ENCODE measurements at regions of chr12 and their contacts with region 1.

Region 1: DNA sequence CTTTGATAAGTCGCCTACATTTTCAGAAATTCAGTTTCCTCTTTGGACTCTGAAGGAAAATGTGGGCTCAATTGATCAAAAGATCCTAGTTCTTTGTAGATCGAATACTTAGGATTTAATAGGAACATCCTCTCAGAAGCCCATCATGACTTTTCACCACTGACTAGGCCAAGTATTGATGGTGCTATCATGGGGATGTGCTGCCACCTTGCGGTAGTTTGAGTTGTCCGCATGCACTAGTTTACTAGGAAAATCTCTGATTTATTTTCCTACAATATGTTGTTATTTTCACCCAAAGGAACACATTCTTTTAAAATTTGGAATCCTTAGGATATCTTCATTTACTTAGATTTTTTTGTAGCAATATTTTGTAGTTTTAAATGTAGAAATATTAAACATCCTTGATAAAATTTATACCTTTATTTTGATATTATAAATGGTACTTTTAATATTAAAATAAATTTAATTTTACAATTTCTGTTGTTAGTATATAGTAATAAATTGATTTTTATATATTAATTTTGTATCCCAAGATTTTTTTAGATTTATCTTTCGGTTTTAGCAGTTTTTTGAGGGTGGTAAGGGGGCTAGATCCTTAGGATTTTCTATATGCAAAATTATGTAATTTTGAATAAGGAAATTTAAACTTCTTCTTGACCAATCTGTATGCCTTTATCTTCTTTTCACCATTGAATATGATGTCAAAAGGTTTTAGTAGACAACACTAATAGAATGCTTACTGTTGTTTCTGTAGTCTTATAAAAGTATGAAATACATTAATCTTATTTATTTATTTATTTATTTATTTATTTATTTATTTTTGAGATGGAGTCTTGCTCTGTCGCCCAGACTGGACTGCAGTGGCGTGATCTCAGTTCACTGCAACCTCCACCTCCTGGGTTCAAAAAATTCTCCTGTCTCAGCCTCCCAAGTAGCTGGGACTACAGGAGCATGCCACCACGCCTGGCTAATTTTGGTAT is 52.9 kb upstream of the OR9K2 start:
- H3K4me3 ChIP-seq: no peak overlapping the region
- H3K27ac ChIP-seq: no peak overlapping the region
- H3K4me1 ChIP-seq: no peaks in the 10 kb centered on the region
- CTCF ChIP-seq: peak; percentile 47

Region 2: DNA sequence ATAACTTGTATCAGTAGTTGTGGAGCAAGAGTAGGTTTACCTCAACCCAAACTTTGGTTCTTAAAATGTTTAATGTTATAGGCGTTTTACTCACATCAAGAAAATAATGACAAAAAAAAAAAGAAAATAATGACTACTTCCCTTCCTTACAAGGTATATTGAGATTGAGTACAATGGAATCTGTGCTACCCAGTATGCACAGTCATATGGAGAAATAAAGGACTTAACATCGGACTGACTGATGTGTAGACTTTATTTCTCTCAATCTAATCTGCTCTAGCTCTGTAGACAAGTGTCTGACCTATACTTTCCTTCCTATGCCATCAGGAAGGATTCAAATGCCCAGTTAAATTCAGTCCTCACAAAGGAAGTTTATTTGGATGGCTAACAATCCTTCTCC is 204.6 kb before region 1 on chr12:
- CTCF ChIA-PET with region 1: no interaction called
- POLR2A ChIA-PET with region 1: no interaction called
- H3K4me3 ChIP-seq: no peak overlapping the region
- H3K27ac ChIP-seq: no peak overlapping the region
- H3K4me1 ChIP-seq: no peaks in the 10 kb centered on the region
- CTCF ChIP-seq: no peak

Region 3: DNA sequence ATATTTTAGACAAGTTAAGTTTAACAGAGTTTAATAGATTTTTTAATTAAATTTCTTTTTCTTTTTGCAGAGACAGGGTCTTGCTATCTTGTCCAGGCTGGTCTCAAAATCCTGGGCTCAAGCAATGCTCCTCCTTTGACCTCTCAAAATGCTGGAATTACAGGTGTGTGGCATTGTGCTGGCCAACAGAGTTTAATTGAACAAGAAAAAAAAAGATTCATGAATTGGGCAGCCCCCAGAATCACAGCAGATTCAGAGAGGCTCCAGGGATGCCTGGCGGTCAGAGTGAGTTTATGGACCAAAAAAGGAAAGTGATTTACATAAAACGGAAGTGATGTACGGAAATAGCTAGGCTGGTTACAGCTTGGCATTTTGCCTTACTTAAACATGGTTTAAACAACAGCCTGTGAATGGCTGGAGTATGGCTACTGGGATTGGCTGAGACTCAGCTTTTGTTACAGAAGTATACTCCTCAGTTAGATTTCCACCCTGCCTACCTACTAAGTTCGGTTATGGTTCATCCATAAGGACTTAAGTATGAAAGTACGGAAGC is 74.3 kb before region 1 on chr12:
- CTCF ChIA-PET with region 1: interaction called, 271 read pairs
- POLR2A ChIA-PET with region 1: no interaction called
- H3K4me3 ChIP-seq: no peak overlapping the region
- H3K27ac ChIP-seq: no peak overlapping the region
- H3K4me1 ChIP-seq: no peaks in the 10 kb centered on the region
- CTCF ChIP-seq: no peak

Region 4: GRCh38 chr12:55051197-55051933 is 22.0 kb before region 1 on chr12:
- CTCF ChIA-PET with region 1: interaction called, 12 read pairs
- POLR2A ChIA-PET with region 1: no interaction called
- H3K4me3 ChIP-seq: no peak overlapping the region
- H3K27ac ChIP-seq: no peak overlapping the region
- H3K4me1 ChIP-seq: no peaks in the 10 kb centered on the region
- CTCF ChIP-seq: no peak

Region 5: GRCh38 chr12:55142669-55143565 is 69.6 kb after region 1 on chr12:
- CTCF ChIA-PET with region 1: no interaction called
- POLR2A ChIA-PET with region 1: no interaction called
- H3K4me3 ChIP-seq: no peak overlapping the region
- H3K27ac ChIP-seq: no peak overlapping the region
- H3K4me1 ChIP-seq: no peaks in the 10 kb centered on the region
- CTCF ChIP-seq: no peak

Region 6: GRCh38 chr12:55246159-55246558 is 172.8 kb after region 1 on chr12:
- CTCF ChIA-PET with region 1: no interaction called
- POLR2A ChIA-PET with region 1: no interaction called
- H3K4me3 ChIP-seq: no peak overlapping the region
- H3K27ac ChIP-seq: no peak overlapping the region
- H3K4me1 ChIP-seq: no peaks in the 10 kb centered on the region
- CTCF ChIP-seq: no peak